ENCODE measurements at regions of chr4 and their contacts with region 1.

Region 1: DNA sequence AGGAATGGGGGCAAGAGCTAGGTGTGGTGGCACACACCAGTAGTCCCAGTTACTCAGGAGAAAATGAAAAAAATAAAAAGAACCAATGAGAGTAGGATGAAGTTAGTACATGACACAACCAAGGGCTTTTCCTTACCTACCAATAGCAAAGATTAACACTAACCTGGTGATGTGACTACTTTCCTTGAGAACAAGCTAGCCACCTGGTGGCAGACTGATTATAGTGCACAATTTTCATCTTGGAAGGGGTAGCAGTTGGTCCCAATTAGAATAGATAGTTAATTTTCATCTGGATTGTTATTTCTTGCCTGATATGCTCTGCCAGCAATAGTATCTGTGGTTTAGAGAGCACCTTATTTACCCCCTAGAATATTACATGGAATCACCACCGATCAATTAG is 1216.8 kb upstream of the PABPC4L start:
- DNase-seq: peak; percentile 3
- ATAC-seq: peak; percentile 59
- H3K4me3 ChIP-seq: no peak overlapping the region
- H3K27ac ChIP-seq: no peak overlapping the region
- H3K4me1 ChIP-seq: no peaks in the 10 kb centered on the region
- H3K27me3 ChIP-seq: no peaks in the 10 kb centered on the region; a peak in 1 of 5 replicates
- CTCF ChIP-seq: peak; percentile 35
- EP300 ChIP-seq: no peak
- POLR2A ChIP-seq: no peak
- RAD21 ChIP-seq: no peak

Region 2: DNA sequence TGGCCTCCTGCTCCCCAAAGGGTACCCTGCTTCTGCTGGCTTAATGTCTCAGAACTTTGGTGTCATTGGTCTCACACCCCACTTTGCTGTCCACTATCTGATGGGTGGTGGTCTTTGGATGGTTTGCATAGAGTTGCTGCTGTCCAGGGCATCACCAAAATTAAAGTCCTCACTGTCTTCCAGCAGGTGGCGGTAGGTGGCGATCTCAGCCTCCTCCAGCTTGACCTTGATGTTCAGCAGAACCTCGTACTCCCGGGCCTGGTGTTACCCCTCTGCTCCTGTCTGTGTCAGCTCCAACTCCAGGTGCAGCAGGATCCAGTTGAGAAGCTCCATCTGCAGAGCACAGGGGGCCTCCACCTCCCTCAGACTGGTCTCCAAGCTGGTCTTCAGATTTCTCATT is 47.2 kb before region 1 on chr4:
- CTCF ChIA-PET with region 1: no interaction called
- POLR2A ChIA-PET with region 1: no interaction called
- in situ Hi-C with region 1: no loop called
- intact Hi-C with region 1: loop called (anchors 1 kb)
- DNase-seq: peak; percentile 15
- ATAC-seq: peak; percentile 88
- H3K4me3 ChIP-seq: no peak overlapping the region
- H3K27ac ChIP-seq: no peak overlapping the region
- H3K4me1 ChIP-seq: no peaks in the 10 kb centered on the region
- H3K27me3 ChIP-seq: no peaks in the 10 kb centered on the region
- CTCF ChIP-seq: peak; percentile 66
- EP300 ChIP-seq: no peak
- POLR2A ChIP-seq: no peak
- RAD21 ChIP-seq: no peak